BJ (cell line): ENCODE measurements at regions of chr4 and their contacts with region 1.

Region 1: DNA sequence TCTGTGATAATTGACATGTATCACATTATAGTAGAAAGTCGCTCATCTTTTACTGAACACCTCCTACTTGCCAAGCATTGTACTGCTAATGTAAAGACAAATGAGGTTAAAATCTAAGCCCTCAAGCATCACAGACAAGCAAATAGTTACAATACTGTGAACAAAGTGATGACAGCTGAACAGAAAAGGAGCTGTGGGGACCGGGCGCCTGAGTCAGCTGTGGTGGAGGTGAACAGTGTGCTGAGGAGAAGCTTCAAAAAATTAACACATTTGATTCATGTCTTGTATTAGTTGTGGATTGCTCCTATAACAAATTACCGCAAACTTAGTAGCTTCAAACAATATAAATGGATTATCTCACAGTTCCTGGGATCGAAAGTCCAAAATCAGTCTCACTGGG is 124.3 kb downstream of the MAPK10 start:
- DNase-seq: no peak
- H3K4me3 ChIP-seq: no peak overlapping the region
- H3K27me3 ChIP-seq: no peaks in the 10 kb centered on the region
- CTCF ChIP-seq: no peak

Region 2: GRCh38 chr4:86895692-86896488 is 660.3 kb after region 1 on chr4:
- CTCF ChIA-PET with region 1: no interaction called
- POLR2A ChIA-PET with region 1: interaction called, 16 read pairs
- DNase-seq: no peak
- H3K4me3 ChIP-seq: no peak overlapping the region
- H3K27me3 ChIP-seq: no peaks in the 10 kb centered on the region
- CTCF ChIP-seq: peak; percentile 64

Region 3: GRCh38 chr4:86908251-86908657 is 672.7 kb after region 1 on chr4:
- CTCF ChIA-PET with region 1: no interaction called
- POLR2A ChIA-PET with region 1: no interaction called
- DNase-seq: no peak
- H3K4me3 ChIP-seq: no peak overlapping the region
- H3K27me3 ChIP-seq: no peaks in the 10 kb centered on the region
- CTCF ChIP-seq: no peak